ENCODE measurements at regions of chr6 and their contacts with region 1.

Region 1: DNA sequence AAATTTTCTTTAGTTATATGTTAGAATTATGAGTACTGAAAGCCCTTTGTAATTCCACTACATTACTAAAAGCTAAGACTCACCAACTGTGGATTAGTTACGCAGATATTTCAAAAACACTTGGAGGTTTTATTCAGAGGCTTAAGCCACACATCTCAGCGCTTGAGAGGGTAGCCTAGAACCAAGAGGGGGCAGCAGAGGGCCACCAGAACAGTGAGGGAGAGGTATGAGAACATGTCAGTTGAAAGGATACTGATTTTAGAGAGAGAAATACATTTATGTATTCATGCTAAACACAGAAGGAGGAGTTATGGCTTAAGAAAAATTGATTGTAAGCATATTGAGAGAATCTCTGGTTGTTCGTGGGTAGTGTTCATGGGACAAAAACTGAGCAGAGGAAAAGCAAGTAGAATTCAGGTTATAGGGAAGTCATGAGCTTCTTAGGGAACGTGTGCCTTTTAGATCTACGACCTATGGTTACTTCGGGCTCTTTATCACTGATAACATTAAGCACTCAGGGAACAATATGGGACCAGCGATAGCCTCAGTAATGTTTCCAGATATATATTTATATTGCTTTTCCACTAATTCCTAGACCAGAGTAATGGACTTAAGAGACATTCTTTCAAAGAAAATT is 20.4 kb upstream of the SERINC1 start:
- DNase-seq: no peak
- ATAC-seq: peak; percentile 100
- H3K4me3 ChIP-seq: no peak overlapping the region
- H3K27ac ChIP-seq: no peak overlapping the region
- H3K4me1 ChIP-seq: no peaks in the 10 kb centered on the region
- H3K27me3 ChIP-seq: no peaks in the 10 kb centered on the region
- CTCF ChIP-seq: peak; percentile 82 to 92 (median 87)
- EP300 ChIP-seq: no peak
- POLR2A ChIP-seq: no peak
- RAD21 ChIP-seq: peak; percentile 86

Region 2: DNA sequence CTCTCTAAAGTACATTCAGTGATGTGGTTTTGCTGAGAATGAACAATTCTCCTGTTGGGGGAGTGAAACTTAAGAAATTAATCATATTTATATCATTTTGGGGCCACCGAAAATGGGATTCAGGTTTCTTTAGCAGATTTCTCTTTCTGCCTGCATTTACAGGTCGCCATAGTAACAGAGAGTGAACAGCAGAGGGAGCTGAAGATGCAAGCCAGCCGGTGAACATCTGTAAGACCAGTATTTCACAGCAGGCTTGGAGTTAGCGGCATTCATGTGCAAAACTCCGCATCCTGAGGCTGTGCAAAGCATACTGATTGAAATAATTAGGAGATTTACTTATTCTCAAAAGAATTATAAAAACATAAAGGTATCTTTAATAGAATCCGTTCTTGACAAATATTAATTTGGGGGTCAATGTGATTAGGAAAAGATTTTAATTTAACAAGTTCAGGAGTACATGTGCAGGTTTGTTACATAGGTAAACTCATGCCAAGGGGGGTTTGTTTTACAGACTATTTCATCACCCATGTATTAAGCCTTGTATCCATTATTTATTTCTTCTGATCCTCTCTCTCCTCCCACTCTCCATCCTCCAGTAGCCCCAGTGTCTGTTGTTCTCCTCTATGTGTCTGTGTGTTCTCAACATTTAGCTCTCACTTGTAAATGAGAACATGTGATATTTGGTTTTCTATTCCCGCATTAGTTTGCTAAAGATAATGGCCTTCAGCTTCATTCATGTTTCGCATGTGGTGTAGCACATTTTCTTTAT is 110.4 kb before region 1 on chr6:
- CTCF ChIA-PET with region 1: interaction called, 18 read pairs
- POLR2A ChIA-PET with region 1: no interaction called
- RAD21 ChIA-PET with region 1: no interaction called
- SMC1A ChIA-PET with region 1: no interaction called
- in situ Hi-C with region 1: no loop called
- intact Hi-C with region 1: no loop called
- DNase-seq: peak; percentile 7
- ATAC-seq: peak; percentile 95
- H3K4me3 ChIP-seq: no peak overlapping the region
- H3K27ac ChIP-seq: no peak overlapping the region
- H3K4me1 ChIP-seq: no peaks in the 10 kb centered on the region
- H3K27me3 ChIP-seq: no peaks in the 10 kb centered on the region; a peak in 1 of 4 replicates
- CTCF ChIP-seq: peak; percentile 74 to 82 (median 80)
- EP300 ChIP-seq: no peak
- POLR2A ChIP-seq: no peak
- RAD21 ChIP-seq: peak; percentile 83

Region 3: GRCh38 chr6:122471107-122472021 is 20.7 kb before region 1 on chr6 and contains the start of gene SERINC1:
- CTCF ChIA-PET with region 1: interaction called, 12 read pairs
- POLR2A ChIA-PET with region 1: no interaction called
- RAD21 ChIA-PET with region 1: interaction called, 3 read pairs
- SMC1A ChIA-PET with region 1: interaction called, 3 read pairs
- in situ Hi-C with region 1: no loop called
- intact Hi-C with region 1: no loop called
- DNase-seq: peak; percentile 66
- ATAC-seq: peak; percentile 98
- H3K4me3 ChIP-seq: peak within 1 kb of the TSS; percentile 92
- H3K27ac ChIP-seq: peak within 1 kb of the TSS; percentile 89
- H3K4me1 ChIP-seq: no peaks in the 10 kb centered on the region; the same call in 1 of the 2 replicates
- H3K27me3 ChIP-seq: no peaks in the 10 kb centered on the region
- CTCF ChIP-seq: no peak
- EP300 ChIP-seq: no peak
- POLR2A ChIP-seq: peak; percentile 91
- RAD21 ChIP-seq: no peak
- polyA plus RNA-seq, gene SERINC1: 18.5 to 22.5 TPM

Region 4: GRCh38 chr6:122511193-122511924 is 19.3 kb after region 1 on chr6:
- CTCF ChIA-PET with region 1: interaction called, 7 read pairs
- POLR2A ChIA-PET with region 1: no interaction called
- RAD21 ChIA-PET with region 1: no interaction called
- SMC1A ChIA-PET with region 1: interaction called, 13 read pairs
- in situ Hi-C with region 1: no loop called
- intact Hi-C with region 1: no loop called
- DNase-seq: no peak
- ATAC-seq: no peak
- H3K4me3 ChIP-seq: no peak overlapping the region
- H3K27ac ChIP-seq: no peak overlapping the region
- H3K4me1 ChIP-seq: no peaks in the 10 kb centered on the region
- H3K27me3 ChIP-seq: no peaks in the 10 kb centered on the region
- CTCF ChIP-seq: no peak
- EP300 ChIP-seq: no peak
- POLR2A ChIP-seq: no peak
- RAD21 ChIP-seq: no peak

Region 5: DNA sequence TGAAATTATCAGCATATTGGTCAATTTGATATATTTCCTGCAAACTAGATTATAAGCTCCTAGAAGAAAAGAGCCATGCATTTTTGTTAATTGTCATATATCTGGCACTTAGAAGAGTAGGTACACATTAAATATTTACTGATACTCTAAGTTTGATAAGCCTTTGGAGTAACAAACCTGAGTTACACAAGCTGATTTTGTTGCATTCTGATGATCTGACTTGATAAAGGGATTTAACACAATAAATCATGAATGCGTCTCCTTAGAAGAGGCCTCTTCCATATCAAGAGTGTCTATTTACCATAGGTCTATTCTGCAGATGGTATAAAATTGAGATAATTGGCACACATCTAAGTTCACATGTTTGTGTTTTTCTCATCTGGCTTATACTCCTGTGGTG is 28.1 kb after region 1 on chr6:
- CTCF ChIA-PET with region 1: interaction called, 10 read pairs
- POLR2A ChIA-PET with region 1: no interaction called
- RAD21 ChIA-PET with region 1: no interaction called
- SMC1A ChIA-PET with region 1: interaction called, 13 read pairs
- in situ Hi-C with region 1: no loop called
- intact Hi-C with region 1: no loop called
- DNase-seq: no peak
- ATAC-seq: no peak
- H3K4me3 ChIP-seq: no peak overlapping the region
- H3K27ac ChIP-seq: no peak overlapping the region
- H3K4me1 ChIP-seq: no peaks in the 10 kb centered on the region
- H3K27me3 ChIP-seq: no peaks in the 10 kb centered on the region; a peak in 1 of 4 replicates
- CTCF ChIP-seq: no peak
- EP300 ChIP-seq: no peak
- POLR2A ChIP-seq: no peak
- RAD21 ChIP-seq: no peak

Region 6: DNA sequence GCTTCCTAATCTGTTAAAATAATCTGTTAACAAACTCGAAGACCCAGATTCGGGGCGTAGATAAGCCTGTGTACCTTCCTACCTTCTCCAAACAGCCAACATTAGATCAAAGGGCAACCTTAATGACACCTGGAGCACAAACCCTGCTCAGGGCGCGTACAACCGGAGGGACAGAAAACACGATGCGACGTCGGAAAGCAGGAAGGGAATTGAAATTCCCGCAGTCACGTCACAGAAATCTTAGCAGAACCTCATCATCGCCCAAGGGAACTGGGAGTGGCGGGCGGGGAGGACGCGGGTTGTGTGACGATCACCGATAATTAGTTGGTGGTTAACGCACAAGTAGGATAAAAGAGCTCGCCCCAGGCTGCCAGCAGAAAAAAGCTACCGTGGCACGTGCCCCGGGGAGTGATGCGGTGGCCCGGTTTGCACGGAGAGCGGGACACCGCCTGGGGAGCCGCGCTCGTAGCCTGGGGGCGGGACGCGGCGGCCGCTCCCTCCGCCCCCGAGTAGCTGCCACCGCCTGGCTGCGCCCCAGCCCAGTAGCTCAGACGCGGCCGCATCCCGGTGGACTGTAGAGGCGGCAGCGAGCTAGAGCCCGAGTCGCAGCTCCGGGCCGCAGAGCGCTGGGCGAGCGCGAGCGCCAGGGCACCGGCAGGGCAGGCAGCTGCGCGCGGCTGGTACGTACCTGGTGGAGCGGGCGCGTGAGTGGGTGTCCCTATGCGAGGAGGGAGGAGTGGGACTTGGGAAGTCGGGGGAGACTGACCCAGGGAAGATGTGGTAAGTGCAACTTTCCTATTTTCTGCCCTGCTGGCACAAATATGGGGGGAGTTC is 118.0 kb after region 1 on chr6 and contains the start of gene PKIB:
- CTCF ChIA-PET with region 1: interaction called, 4 read pairs
- POLR2A ChIA-PET with region 1: interaction called, 4 read pairs
- RAD21 ChIA-PET with region 1: no interaction called
- SMC1A ChIA-PET with region 1: interaction called, 3 read pairs
- in situ Hi-C with region 1: no loop called
- intact Hi-C with region 1: loop called (anchors 5 kb)
- DNase-seq: no peak
- ATAC-seq: peak; percentile 98
- H3K4me3 ChIP-seq: peak within 1 kb of the TSS; percentile 50
- H3K27ac ChIP-seq: no peak within 1 kb of the TSS
- H3K4me1 ChIP-seq: peaks cover 5% of the 10 kb centered on the region
- H3K27me3 ChIP-seq: peaks cover 8 to 17% of the 10 kb centered on the region in 2 experiments
- CTCF ChIP-seq: peak in 2 of 3 experiments; percentile 19 to 24; a peak in 2 of 6 replicates
- EP300 ChIP-seq: no peak
- POLR2A ChIP-seq: no peak
- RAD21 ChIP-seq: no peak
- polyA plus RNA-seq, gene PKIB: 0.97 to 1.8 TPM

Region 7: DNA sequence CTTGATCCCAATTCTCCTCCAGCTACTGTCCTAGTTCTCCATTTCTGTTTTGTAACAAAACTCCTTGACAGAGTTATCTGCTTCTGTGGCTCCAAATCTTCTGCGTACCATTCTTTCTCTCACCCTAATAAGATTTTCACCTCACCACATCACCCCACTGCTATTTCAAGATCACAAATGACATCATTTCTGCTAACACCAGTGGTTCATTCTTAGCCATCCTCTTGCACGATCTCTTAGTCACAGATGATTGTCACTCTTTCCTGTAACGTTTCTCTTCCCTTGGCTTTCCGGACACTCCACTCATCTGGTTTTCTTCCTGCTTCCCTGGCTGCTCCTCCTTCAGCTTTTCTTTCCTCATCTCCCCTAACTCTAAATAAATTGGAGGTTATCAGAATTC is 230.7 kb after region 1 on chr6:
- CTCF ChIA-PET with region 1: interaction called, 97 read pairs
- POLR2A ChIA-PET with region 1: no interaction called
- RAD21 ChIA-PET with region 1: interaction called, 29 read pairs
- SMC1A ChIA-PET with region 1: interaction called, 86 read pairs
- in situ Hi-C with region 1: no loop called
- intact Hi-C with region 1: loop called (anchors 1 kb)
- DNase-seq: no peak
- ATAC-seq: peak; percentile 63
- H3K4me3 ChIP-seq: no peak overlapping the region
- H3K27ac ChIP-seq: no peak overlapping the region
- H3K4me1 ChIP-seq: no peaks in the 10 kb centered on the region
- H3K27me3 ChIP-seq: no peaks in the 10 kb centered on the region; a peak in 1 of 4 replicates
- CTCF ChIP-seq: no peak
- EP300 ChIP-seq: no peak
- POLR2A ChIP-seq: no peak
- RAD21 ChIP-seq: no peak

Region 8: GRCh38 chr6:123201869-123202372 is 709.9 kb after region 1 on chr6:
- CTCF ChIA-PET with region 1: no interaction called
- POLR2A ChIA-PET with region 1: no interaction called
- RAD21 ChIA-PET with region 1: no interaction called
- SMC1A ChIA-PET with region 1: no interaction called
- in situ Hi-C with region 1: no loop called
- intact Hi-C with region 1: no loop called
- DNase-seq: no peak
- ATAC-seq: no peak
- H3K4me3 ChIP-seq: no peak overlapping the region
- H3K27ac ChIP-seq: no peak overlapping the region
- H3K4me1 ChIP-seq: no peaks in the 10 kb centered on the region
- H3K27me3 ChIP-seq: no peaks in the 10 kb centered on the region
- CTCF ChIP-seq: no peak
- EP300 ChIP-seq: no peak
- POLR2A ChIP-seq: no peak
- RAD21 ChIP-seq: no peak